Activated CD8-positive, alpha-beta T cell treated with anti-CD3 and anti-CD28 coated beads, Interleukin-2, amount 10 ng/mL, durations not matched to agents 7 days and 5 days (primary cell): ENCODE measurements at regions of chr1 and their contacts with region 1.

Region 1: GRCh38 chr1:172745014-172745413 is 86.1 kb downstream of the FASLG start:
- DNase-seq: peak; percentile 70
- ATAC-seq: peak; percentile 62
- H3K4me3 Mint-ChIP-seq: no peak overlapping the region
- H3K27ac Mint-ChIP-seq: no peak overlapping the region
- H3K4me1 Mint-ChIP-seq: peaks cover 44% of the 10 kb centered on the region
- H3K27me3 Mint-ChIP-seq: peaks cover 23% of the 10 kb centered on the region

Region 2: GRCh38 chr1:171769171-171769570 is 975.8 kb before region 1 on chr1:
- CTCF ChIA-PET with region 1: no interaction called
- POLR2A ChIA-PET with region 1: no interaction called
- DNase-seq: no peak
- ATAC-seq: no peak
- H3K4me3 Mint-ChIP-seq: no peak overlapping the region
- H3K27ac Mint-ChIP-seq: no peak overlapping the region
- H3K4me1 Mint-ChIP-seq: no peaks in the 10 kb centered on the region
- H3K27me3 Mint-ChIP-seq: peaks cover 22% of the 10 kb centered on the region

Region 3: DNA sequence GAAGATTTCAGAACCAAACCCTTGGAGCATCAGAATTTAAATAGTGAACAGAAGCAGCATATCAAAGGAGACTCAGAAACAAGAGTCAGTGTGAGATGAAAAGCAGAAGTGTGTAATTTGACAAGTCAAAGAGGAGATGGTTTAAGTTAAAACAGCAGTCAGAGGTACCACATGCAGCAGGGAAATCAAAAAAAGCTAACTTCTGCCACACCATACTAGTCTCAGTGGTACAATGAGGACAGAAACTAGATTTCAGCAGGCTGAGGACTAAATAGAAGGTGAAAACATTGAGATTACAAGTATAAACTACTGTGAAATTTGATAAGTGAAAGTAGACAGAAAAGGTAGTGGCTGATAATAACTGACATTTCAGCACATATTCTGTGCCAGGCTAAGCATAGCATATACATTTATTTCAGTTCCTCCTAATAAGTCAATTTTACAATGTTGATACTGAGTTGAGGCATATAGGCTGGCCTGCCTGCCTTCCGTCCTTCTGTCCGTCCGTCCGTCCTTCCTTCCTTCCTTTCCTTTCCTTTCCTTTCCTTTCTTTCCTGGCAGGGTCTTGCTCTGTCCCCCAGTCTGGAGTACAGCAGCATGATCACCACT is 199.5 kb before region 1 on chr1:
- CTCF ChIA-PET with region 1: no interaction called
- POLR2A ChIA-PET with region 1: no interaction called
- DNase-seq: no peak
- ATAC-seq: no peak
- H3K4me3 Mint-ChIP-seq: no peak overlapping the region
- H3K27ac Mint-ChIP-seq: no peak overlapping the region
- H3K4me1 Mint-ChIP-seq: peaks cover 24% of the 10 kb centered on the region
- H3K27me3 Mint-ChIP-seq: no peaks in the 10 kb centered on the region

Region 4: GRCh38 chr1:172727956-172728603 is 16.9 kb before region 1 on chr1:
- CTCF ChIA-PET with region 1: interaction called, 63 read pairs
- POLR2A ChIA-PET with region 1: no interaction called
- DNase-seq: peak; percentile 68
- ATAC-seq: peak; percentile 88
- H3K4me3 Mint-ChIP-seq: no peak overlapping the region
- H3K27ac Mint-ChIP-seq: peak overlapping the region; percentile 1
- H3K4me1 Mint-ChIP-seq: peaks cover 38% of the 10 kb centered on the region
- H3K27me3 Mint-ChIP-seq: peaks cover 16% of the 10 kb centered on the region

Region 5: DNA sequence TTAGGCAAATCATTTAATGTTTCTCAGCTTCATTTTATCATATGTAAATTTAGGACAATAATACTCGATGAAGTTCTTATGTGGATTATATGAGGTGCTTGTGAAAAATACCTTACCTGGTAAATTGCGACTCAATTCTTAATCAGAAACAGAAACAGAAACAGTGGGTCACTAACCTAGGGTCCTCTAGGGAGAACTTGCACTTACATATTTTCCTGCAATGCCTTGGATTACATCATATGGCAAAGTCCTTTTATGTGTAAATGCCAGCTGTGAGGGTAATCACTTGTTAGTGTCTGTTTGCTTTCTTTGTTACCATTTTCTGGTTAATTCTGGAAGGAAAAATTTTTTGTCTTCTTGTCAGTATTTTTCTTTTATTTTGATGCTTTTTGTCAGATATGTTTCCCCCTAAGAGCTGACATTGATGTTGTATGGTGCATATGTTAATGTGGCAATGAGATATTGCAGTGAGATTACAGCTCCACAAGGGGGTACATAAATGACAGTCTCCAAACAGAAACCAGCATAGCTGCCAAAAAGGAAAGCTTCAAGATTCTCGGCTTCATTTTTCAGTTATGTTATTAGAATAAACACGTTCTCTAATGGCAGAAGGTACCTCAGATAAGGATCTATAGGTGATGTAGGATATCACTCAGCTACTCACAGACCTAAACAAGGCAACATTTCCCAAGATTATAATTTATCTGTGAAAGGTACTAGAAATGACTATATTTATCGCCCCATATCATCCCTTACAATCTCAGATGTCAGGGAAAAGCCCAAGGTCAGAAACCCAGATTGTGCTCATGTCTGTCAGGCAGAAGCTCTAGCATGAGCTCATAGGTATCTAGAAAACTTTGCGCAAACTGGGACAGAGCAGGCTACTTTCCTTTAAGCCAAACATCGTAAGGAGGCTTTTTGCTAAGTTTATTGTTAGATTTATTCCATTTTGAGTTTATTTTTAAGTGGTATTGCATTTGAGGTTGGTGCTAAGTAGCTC is 33.7 kb after region 1 on chr1:
- CTCF ChIA-PET with region 1: interaction called, 32 read pairs
- POLR2A ChIA-PET with region 1: no interaction called
- DNase-seq: peak; percentile 32
- ATAC-seq: peak; percentile 73
- H3K4me3 Mint-ChIP-seq: peak overlapping the region; percentile 16
- H3K27ac Mint-ChIP-seq: peak overlapping the region; percentile 17
- H3K4me1 Mint-ChIP-seq: peaks cover 31% of the 10 kb centered on the region
- H3K27me3 Mint-ChIP-seq: no peaks in the 10 kb centered on the region

Region 6: GRCh38 chr1:172826096-172826743 is 81.2 kb after region 1 on chr1:
- CTCF ChIA-PET with region 1: interaction called, 70 read pairs
- POLR2A ChIA-PET with region 1: interaction called, 3 read pairs
- DNase-seq: no peak
- ATAC-seq: peak; percentile 55
- H3K4me3 Mint-ChIP-seq: no peak overlapping the region
- H3K27ac Mint-ChIP-seq: no peak overlapping the region
- H3K4me1 Mint-ChIP-seq: peaks cover 26% of the 10 kb centered on the region
- H3K27me3 Mint-ChIP-seq: no peaks in the 10 kb centered on the region

Region 7: DNA sequence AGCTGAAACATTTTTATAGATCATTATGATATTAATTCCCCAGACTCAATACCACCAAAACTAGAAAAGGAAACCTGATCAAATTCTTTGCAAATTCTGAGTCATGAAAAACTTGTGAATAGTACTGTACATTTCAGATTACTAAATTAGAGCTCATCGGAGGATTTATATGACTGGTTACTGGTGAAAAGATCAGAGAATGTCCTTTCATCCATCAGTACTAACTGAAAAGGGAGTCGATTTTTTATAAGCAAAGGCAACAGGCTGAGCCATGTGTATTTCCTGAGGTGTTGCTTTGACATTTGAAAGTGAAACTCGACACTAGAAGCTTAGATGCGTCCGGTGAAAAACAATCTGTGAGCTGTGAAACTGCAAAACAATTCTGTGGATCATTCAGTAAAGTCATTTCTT is 150.0 kb after region 1 on chr1:
- CTCF ChIA-PET with region 1: interaction called, 27 read pairs
- POLR2A ChIA-PET with region 1: no interaction called
- DNase-seq: peak; percentile 62
- ATAC-seq: peak; percentile 91
- H3K4me3 Mint-ChIP-seq: peak overlapping the region; percentile 70
- H3K27ac Mint-ChIP-seq: peak overlapping the region; percentile 93
- H3K4me1 Mint-ChIP-seq: peaks cover 49% of the 10 kb centered on the region
- H3K27me3 Mint-ChIP-seq: peaks cover 1% of the 10 kb centered on the region

Region 8: DNA sequence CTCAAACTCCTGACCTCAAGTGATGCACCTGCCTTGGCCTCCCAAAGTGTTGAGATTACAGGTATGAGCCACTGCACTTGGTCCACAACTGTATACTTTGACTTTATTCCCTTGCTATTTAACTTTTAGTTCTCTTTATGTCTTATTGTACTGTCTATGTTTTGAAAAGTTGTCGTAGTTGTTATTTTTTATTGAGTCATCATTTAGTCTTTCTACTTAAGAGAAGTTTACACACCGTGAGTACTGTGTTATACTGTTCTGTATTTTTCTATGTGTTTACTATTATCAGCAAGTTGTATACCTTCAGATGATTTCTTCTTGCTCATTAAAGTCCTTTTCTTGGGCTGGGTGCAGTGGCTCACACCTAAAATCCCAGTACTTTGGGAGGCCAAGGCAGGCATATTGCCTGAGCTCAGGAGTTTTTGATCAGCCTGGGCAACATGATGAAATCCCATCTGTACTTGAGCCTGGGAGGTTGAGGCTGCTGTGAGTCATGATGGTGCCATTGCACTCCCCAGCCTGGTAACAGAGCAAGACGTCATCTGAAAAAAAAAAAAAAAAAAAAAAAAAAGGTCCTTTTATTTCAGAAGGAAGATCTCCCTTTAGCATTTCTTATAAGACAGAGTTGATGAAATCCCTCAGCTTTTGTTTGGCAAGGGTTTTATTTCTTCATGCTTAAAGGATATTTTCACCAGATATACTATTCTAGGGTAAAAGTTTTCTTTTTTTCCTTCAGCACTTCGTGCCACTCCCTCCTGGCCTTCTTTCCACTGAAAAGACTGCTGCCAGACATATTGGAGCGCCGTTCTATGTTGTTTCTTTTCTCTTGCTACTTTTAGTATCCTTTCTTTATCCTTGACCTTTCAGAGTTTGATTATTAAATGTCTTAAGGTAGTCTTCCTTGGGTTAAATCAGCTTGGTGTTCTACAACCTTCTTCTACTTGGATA is 258.2 kb after region 1 on chr1:
- CTCF ChIA-PET with region 1: no interaction called
- POLR2A ChIA-PET with region 1: no interaction called
- DNase-seq: no peak
- ATAC-seq: no peak
- H3K4me3 Mint-ChIP-seq: no peak overlapping the region
- H3K27ac Mint-ChIP-seq: no peak overlapping the region
- H3K4me1 Mint-ChIP-seq: peaks cover 13% of the 10 kb centered on the region
- H3K27me3 Mint-ChIP-seq: no peaks in the 10 kb centered on the region

Region 9: DNA sequence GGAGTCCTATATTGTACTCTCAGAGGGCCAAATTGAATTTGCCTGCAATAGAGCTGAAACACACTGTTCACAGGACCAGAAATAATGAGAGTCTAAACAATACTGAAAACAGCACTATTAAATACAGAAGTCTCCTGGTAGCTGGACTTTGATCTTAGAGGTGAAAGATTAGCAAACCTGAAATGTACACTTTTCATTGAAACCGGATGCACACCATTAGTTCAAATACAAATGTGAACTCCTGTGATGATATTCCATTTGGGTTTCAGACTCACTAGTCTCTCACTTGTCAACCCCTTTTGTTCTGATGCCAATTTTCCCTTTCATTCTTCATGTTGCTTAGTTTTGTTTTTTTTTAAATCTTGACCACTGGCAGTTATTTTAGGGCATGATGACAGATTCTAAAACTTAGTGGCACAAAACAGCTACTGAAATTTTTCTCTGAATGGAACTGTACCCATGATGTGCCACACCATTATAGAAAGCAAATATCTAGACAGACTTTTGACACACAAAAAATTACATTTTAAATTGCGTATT is 468.0 kb after region 1 on chr1:
- CTCF ChIA-PET with region 1: interaction called, 285 read pairs
- POLR2A ChIA-PET with region 1: no interaction called
- DNase-seq: no peak
- ATAC-seq: no peak
- H3K4me3 Mint-ChIP-seq: no peak overlapping the region
- H3K27ac Mint-ChIP-seq: no peak overlapping the region
- H3K4me1 Mint-ChIP-seq: peaks cover 22% of the 10 kb centered on the region
- H3K27me3 Mint-ChIP-seq: peaks cover 7% of the 10 kb centered on the region

Region 10: GRCh38 chr1:173429471-173430402 is 684.7 kb after region 1 on chr1:
- CTCF ChIA-PET with region 1: interaction called, 30 read pairs
- POLR2A ChIA-PET with region 1: no interaction called
- DNase-seq: peak; percentile 80
- ATAC-seq: peak; percentile 88
- H3K4me3 Mint-ChIP-seq: peak overlapping the region; percentile 60
- H3K27ac Mint-ChIP-seq: peak overlapping the region; percentile 86
- H3K4me1 Mint-ChIP-seq: peaks cover 31% of the 10 kb centered on the region
- H3K27me3 Mint-ChIP-seq: no peaks in the 10 kb centered on the region